Activated CD4-positive, alpha-beta T cell treated with anti-CD3 and anti-CD28 coated beads, Interleukin-2, amount 10 ng/mL, durations not matched to agents 24 days and 14 days (primary cell): ENCODE measurements at regions of chr15 and their contacts with region 1.

Region 1: DNA sequence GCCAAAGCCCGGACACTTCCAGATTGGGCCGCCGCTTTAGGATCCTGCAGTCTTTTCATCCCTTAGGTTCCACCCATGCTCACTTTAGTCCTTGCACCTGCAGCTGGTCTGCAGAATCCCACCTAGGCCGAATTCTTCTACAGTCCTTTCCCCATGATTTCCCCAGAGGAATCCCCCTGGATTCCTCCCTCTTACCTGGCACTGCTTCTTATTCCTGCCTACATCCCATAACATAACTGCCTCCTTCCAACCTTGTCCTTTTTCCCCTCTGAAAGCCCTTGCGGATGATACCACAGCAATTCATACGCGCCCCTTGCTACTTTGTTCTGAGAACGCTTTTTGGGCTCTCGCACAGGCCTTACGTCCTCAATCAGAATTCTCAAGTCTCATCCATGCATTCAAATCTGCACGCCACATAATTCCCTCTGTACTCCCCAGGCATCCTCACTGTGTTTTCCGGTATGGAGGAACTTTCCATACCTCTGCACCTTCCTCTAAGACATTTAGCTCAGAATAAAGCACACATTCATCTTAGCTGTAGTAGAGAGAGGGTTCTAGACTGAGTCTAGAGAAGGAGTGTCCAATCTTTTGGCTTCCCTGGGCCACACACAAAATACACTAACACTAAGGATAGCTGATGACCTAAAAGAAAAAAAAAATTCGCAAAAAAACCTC is 619 bp downstream of the EIF2AK4 start:
- DNase-seq: no peak
- H3K4me3 Mint-ChIP-seq: peak overlapping the region; percentile 89
- H3K27ac Mint-ChIP-seq: peak overlapping the region; percentile 76
- H3K4me1 Mint-ChIP-seq: peaks cover 37% of the 10 kb centered on the region
- H3K27me3 Mint-ChIP-seq: peaks cover 2% of the 10 kb centered on the region

Region 2: GRCh38 chr15:39413558-39413957 is 521.0 kb before region 1 on chr15:
- intact Hi-C with region 1: no loop called
- DNase-seq: no peak
- H3K4me3 Mint-ChIP-seq: no peak overlapping the region
- H3K27ac Mint-ChIP-seq: no peak overlapping the region
- H3K4me1 Mint-ChIP-seq: peaks cover 8% of the 10 kb centered on the region
- H3K27me3 Mint-ChIP-seq: peaks cover 32% of the 10 kb centered on the region

Region 3: DNA sequence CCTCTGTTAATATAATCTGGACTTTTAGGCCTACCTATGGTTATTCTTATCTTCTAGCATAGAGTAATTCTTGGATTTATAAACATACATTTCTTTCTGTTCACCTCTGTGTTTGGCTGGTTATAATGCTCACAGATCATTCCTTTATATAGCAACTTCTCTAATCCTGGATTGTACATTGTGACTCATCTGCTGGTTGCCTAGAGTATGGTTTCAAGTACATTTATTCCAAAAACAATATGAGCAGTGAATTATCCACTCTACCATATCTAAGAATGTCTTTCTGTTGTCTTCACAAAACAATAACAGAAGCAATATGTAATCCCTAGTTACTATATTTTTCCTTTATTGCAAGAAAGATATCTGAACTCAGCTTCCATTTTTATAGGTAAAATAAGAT is 187.2 kb before region 1 on chr15:
- intact Hi-C with region 1: no loop called
- DNase-seq: no peak
- H3K4me3 Mint-ChIP-seq: no peak overlapping the region
- H3K27ac Mint-ChIP-seq: no peak overlapping the region
- H3K4me1 Mint-ChIP-seq: no peaks in the 10 kb centered on the region
- H3K27me3 Mint-ChIP-seq: peaks cover 59% of the 10 kb centered on the region

Region 4: DNA sequence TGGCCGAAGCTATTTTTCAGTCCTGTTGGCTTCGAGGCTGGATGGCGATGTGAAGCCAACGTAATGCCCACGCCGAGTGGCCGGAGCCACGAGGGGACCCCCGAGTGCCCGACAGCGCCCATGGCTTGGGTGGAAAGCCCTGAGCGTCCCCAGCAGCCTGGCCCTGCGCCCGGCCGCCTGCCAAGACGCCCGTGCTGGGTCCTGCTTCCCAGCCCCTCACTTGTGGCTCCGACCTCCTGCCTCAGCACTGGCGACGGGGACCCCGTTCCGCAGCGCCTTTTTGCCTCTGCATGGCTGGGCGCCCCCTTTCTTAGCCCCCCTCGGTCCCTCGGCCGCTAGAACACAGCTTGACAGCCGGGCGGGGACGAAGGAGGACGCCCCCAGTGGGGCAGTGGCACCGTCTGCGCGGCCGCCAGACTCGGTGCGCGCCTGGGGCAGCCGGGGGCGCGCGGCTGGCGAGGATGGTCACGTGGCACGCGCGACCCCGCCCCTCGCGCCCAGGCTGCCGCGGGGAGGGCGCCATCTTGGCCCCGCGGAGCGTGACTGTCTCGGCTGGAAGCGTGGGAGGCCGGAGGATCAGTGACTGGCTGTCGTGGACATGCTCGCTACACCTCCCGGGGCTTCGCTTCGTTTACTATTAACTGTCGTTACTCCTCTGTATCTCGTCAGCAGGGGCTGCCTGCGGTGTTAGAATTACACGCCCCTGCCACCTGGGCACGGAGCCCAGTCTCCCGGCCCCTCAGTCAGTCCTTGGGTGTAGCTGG is 13.8 kb before region 1 on chr15:
- intact Hi-C with region 1: loop called (anchors 1 kb)
- DNase-seq: peak; percentile 93
- H3K4me3 Mint-ChIP-seq: peak overlapping the region; percentile 89
- H3K27ac Mint-ChIP-seq: peak overlapping the region; percentile 78
- H3K4me1 Mint-ChIP-seq: peaks cover 23% of the 10 kb centered on the region
- H3K27me3 Mint-ChIP-seq: peaks cover 25% of the 10 kb centered on the region

Region 5: GRCh38 chr15:39947401-39948197 is 13.1 kb after region 1 on chr15:
- intact Hi-C with region 1: loop called (anchors 2 kb)
- DNase-seq: peak; percentile 69
- H3K4me3 Mint-ChIP-seq: peak overlapping the region; percentile 42
- H3K27ac Mint-ChIP-seq: peak overlapping the region; percentile 91
- H3K4me1 Mint-ChIP-seq: peaks cover 26% of the 10 kb centered on the region
- H3K27me3 Mint-ChIP-seq: no peaks in the 10 kb centered on the region

Region 6: GRCh38 chr15:39966521-39966920 is 32.0 kb after region 1 on chr15:
- intact Hi-C with region 1: loop called (anchors 5 kb)
- DNase-seq: no peak
- H3K4me3 Mint-ChIP-seq: no peak overlapping the region
- H3K27ac Mint-ChIP-seq: no peak overlapping the region
- H3K4me1 Mint-ChIP-seq: peaks cover 23% of the 10 kb centered on the region
- H3K27me3 Mint-ChIP-seq: no peaks in the 10 kb centered on the region

Region 7: DNA sequence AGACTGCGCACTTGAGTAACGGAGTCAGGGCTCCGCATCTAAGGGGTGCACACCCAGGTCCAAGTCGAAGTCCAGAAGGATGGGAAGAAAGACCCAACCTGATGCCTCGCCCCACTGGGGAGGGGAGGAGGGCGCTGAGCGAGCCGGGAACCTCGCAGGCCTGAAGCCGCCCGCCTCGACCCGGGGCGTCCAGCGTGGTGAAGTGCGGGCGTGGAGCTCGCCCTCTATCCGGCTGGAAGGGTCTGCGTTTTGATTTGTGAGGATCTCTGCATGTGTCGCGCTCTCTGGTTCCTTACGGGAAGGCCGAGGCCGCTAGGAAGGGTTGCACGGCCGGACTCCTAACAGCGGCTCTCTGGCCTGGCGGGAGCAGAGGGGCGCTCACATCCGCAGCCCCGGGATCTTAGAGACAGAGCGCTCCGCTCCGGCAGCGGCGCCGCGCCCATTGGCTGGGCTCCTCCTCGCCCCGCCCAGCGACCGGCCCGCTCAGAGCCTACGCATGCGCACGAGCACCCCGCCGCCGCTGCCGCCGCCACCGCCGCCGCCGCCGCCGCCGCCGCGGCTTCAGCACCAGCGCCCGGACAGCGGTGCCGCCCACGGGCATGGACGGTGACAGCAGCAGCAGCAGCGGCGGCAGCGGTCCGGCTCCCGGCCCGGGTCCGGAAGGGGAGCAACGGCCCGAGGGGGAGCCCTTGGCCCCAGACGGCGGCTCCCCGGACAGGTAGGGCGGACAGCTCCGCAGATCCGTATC is 423.4 kb after region 1 on chr15 and contains the start of gene DISP2:
- intact Hi-C with region 1: no loop called
- DNase-seq: peak; percentile 97
- H3K4me3 Mint-ChIP-seq: peak within 1 kb of the TSS; percentile 82
- H3K27ac Mint-ChIP-seq: peak within 1 kb of the TSS; percentile 45
- H3K4me1 Mint-ChIP-seq: peaks cover 21% of the 10 kb centered on the region
- H3K27me3 Mint-ChIP-seq: peaks cover 34% of the 10 kb centered on the region
- total RNA-seq, gene DISP2: 0.02 and 0.05 TPM in 2 replicates